B cell (primary cell): ENCODE measurements at regions of chrX and their contacts with region 1.

Region 1: DNA sequence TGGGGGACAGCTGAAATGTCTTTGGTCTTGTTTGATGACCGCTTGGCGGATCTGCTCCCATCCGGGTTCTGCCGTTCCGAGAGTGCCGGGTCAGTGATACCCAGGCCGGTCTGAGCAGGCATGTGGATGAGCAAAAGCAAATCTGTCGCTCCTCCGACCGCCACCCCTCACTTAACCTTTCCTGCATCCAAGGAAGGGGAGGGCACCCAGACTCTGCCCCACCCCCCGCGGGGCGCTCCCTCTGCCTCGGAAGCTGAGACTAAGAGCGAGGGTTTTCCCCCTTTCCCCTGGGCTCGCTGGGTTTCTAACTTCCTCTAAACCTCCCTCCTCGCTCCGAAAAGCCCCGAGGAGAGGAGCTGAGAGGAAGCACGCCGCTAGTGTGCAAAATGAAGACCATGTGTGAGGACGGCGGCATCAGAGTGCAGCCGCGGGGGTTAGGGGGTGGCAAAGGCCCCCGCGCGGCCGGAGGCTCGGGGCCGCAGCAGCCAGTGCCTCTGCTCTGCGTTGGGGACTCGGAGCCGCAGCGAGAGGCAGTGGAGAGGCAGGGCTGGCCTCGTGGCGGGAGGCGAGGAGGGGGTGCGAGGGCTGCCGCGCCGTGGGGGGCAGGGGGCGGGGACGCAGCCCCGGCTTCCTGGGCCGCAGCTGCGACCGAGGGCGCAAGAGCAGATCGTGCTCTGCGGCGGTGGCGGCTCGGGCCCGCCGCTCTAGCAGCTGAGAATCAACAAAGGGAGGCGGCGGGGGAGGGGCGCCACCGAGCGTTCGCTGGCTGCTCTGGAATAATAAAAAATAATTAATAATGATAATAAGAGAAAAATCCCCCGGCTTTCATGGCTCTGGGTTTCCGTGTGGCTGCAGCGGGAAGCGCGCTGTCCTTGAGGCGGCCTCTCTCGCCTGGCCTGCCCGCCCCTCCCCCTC is 55.8 kb upstream of the BCOR start:
- DNase-seq: peak; percentile 87
- ATAC-seq: peak; percentile 71
- H3K4me3 ChIP-seq: peak overlapping the region in 4 of 5 experiments; percentile 46 to 59 (median 54)
- H3K4me3 Mint-ChIP-seq: peak overlapping the region; percentile 89
- H3K27ac ChIP-seq: peak overlapping the region; percentile 9 to 50
- H3K27ac Mint-ChIP-seq: peak overlapping the region; percentile 88
- H3K4me1 ChIP-seq: peaks cover 41 to 63% of the 10 kb centered on the region in 2 donors
- H3K4me1 Mint-ChIP-seq: peaks cover 46% of the 10 kb centered on the region
- H3K27me3 ChIP-seq: no peaks in the 10 kb centered on the region
- H3K27me3 Mint-ChIP-seq: peaks cover 3% of the 10 kb centered on the region
- CTCF ChIP-seq: no peak

Region 2: DNA sequence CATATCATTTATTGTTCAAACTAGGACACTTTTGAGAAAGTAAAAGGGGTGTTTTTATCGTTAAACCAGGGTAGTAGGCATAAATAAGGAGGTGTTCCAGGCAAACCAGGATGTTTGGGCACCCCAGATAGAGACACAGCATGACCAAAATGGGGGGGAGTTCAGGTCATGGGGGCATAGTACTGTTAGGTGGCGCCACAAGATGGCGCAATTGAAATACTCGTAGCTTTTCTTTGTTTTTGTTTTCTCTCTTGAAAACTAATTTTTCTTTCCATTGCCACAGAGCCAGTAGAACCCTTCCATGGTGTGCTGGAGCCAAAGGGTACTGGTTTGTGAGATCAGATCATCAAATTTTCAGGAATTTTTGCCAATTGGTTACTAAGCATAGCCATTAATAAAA is 339.2 kb before region 1 on chrX:
- CTCF ChIA-PET with region 1: interaction called, 4 read pairs
- POLR2A ChIA-PET with region 1: interaction called, 4 read pairs
- intact Hi-C with region 1: loop called (anchors 2 kb)
- DNase-seq: peak; percentile 43
- ATAC-seq: no peak
- H3K4me3 ChIP-seq: no peak overlapping the region
- H3K4me3 Mint-ChIP-seq: no peak overlapping the region
- H3K27ac ChIP-seq: no peak overlapping the region
- H3K27ac Mint-ChIP-seq: no peak overlapping the region
- H3K4me1 ChIP-seq: no peaks in the 10 kb centered on the region
- H3K4me1 Mint-ChIP-seq: peaks cover 10% of the 10 kb centered on the region
- H3K27me3 ChIP-seq: peaks cover 0 to 20% (median 1%) of the 10 kb centered on the region in 4 experiments
- H3K27me3 Mint-ChIP-seq: peaks cover 31% of the 10 kb centered on the region
- CTCF ChIP-seq: peak; percentile 32

Region 3: DNA sequence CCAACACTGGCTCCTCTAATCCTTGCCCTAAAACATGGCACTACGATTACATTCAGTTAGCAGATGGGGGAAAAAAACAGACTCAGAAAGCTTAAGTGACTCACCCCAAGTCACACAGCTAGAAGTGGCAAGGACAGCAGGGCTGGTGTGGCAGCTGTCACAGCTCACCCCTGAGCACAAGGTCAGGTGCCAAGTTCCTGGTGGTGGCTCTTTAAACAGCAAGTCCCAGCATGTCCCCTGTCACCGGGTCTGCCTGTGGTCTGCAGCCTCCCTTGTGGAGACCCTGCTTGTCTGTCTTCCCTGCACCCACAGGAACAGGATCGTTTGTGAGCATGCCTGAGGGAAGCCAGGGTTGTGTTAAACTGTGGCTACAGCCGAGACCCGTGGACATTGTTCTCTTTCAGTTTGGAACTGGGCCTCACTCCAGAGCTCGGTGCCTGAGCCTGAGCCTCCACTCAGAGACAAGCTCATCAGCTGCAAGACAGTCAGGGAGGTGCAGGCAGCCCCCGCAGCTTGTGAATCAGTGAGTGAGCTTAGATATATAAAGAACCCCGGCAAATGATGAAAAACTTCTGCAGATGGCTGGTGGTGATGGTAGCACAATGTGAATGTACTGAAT is 316.7 kb before region 1 on chrX:
- CTCF ChIA-PET with region 1: no interaction called
- POLR2A ChIA-PET with region 1: no interaction called
- intact Hi-C with region 1: no loop called
- DNase-seq: no peak
- ATAC-seq: no peak
- H3K4me3 ChIP-seq: no peak overlapping the region
- H3K4me3 Mint-ChIP-seq: no peak overlapping the region
- H3K27ac ChIP-seq: no peak overlapping the region
- H3K27ac Mint-ChIP-seq: no peak overlapping the region
- H3K4me1 ChIP-seq: no peaks in the 10 kb centered on the region
- H3K4me1 Mint-ChIP-seq: no peaks in the 10 kb centered on the region
- H3K27me3 ChIP-seq: peaks cover 0 to 25% (median 0%) of the 10 kb centered on the region in 4 experiments
- H3K27me3 Mint-ChIP-seq: peaks cover 38% of the 10 kb centered on the region
- CTCF ChIP-seq: no peak

Region 4: DNA sequence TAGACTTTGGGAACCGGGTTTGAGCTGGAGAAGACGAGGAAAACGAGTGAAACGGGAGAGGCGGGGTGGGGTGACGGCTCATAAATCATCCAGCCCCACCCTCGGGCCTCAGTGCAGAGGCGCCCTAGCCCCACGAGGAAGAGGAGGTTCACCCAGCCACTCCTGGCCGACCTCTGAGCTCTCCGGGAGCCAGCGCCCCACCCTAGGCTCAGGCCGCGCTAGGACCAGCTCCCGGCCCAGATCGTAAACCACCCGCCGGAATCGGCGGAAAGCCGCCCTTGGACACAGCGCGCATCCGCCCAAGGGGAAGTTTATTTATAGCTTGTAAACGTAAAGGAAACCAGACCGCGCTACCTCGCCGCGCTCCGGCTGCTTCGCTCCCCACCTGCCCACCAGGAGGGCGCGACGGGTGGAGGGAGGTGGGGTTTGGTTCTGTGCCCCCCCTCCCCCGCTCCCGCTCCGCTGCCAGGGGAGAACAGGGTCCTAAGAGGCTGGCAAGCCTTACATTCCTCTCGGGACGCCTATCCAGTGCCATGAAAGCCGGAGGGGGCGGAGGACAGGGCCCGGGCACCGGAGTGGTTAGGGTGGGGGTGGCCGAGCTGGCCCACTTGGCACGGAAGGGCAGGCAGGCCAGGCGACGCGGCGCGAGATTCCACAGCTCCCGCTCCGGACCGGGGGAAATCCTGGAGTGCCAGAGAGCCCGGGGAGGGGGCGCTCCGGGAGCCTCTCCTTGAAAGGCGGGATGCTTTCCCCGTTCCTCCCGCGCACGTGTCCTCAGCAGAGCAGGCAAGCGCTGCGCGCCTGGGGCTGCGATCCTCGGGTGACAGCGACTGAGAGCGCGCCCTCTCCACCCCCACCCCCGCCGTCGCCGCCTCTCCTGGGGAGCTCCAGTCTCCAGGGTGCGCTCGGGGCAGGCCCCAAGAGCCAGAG is 140.1 kb before region 1 on chrX:
- CTCF ChIA-PET with region 1: no interaction called
- POLR2A ChIA-PET with region 1: interaction called, 6 read pairs
- intact Hi-C with region 1: loop called (anchors 5 kb)
- DNase-seq: peak; percentile 80
- ATAC-seq: peak; percentile 55
- H3K4me3 ChIP-seq: peak overlapping the region in 4 of 5 experiments; percentile 53 to 69 (median 56)
- H3K4me3 Mint-ChIP-seq: peak overlapping the region; percentile 85
- H3K27ac ChIP-seq: peak overlapping the region in 1 of 2 donors; percentile 36
- H3K27ac Mint-ChIP-seq: peak overlapping the region; percentile 71
- H3K4me1 ChIP-seq: peaks cover 43 to 52% of the 10 kb centered on the region in 2 donors
- H3K4me1 Mint-ChIP-seq: peaks cover 34% of the 10 kb centered on the region
- H3K27me3 ChIP-seq: peaks cover 0 to 10% (median under 1%) of the 10 kb centered on the region in 4 experiments
- H3K27me3 Mint-ChIP-seq: peaks cover 2% of the 10 kb centered on the region
- CTCF ChIP-seq: no peak

Region 5: GRCh38 chrX:40108959-40109287 is 44.7 kb before region 1 on chrX:
- CTCF ChIA-PET with region 1: interaction called, 4 read pairs
- POLR2A ChIA-PET with region 1: interaction called, 6 read pairs
- intact Hi-C with region 1: loop called (anchors 1 kb)
- DNase-seq: peak; percentile 58
- ATAC-seq: peak; percentile 39
- H3K4me3 ChIP-seq: peak overlapping the region in 4 of 5 experiments; percentile 24 to 63 (median 48)
- H3K4me3 Mint-ChIP-seq: peak overlapping the region; percentile 66
- H3K27ac ChIP-seq: no peak overlapping the region
- H3K27ac Mint-ChIP-seq: no peak overlapping the region
- H3K4me1 ChIP-seq: peaks cover 18 to 20% of the 10 kb centered on the region in 2 donors
- H3K4me1 Mint-ChIP-seq: peaks cover 17% of the 10 kb centered on the region
- H3K27me3 ChIP-seq: peaks cover 0 to 7% (median 0%) of the 10 kb centered on the region in 4 experiments
- H3K27me3 Mint-ChIP-seq: no peaks in the 10 kb centered on the region
- CTCF ChIP-seq: no peak